Posterior vena cava (tissue), 2 donors: ENCODE measurements at regions of chr4 and their contacts with region 1.

Region 1: GRCh38 chr4:75146223-75146622 is 213.3 kb downstream of the PARM1 start:
- DNase-seq: no peak

Region 2: DNA sequence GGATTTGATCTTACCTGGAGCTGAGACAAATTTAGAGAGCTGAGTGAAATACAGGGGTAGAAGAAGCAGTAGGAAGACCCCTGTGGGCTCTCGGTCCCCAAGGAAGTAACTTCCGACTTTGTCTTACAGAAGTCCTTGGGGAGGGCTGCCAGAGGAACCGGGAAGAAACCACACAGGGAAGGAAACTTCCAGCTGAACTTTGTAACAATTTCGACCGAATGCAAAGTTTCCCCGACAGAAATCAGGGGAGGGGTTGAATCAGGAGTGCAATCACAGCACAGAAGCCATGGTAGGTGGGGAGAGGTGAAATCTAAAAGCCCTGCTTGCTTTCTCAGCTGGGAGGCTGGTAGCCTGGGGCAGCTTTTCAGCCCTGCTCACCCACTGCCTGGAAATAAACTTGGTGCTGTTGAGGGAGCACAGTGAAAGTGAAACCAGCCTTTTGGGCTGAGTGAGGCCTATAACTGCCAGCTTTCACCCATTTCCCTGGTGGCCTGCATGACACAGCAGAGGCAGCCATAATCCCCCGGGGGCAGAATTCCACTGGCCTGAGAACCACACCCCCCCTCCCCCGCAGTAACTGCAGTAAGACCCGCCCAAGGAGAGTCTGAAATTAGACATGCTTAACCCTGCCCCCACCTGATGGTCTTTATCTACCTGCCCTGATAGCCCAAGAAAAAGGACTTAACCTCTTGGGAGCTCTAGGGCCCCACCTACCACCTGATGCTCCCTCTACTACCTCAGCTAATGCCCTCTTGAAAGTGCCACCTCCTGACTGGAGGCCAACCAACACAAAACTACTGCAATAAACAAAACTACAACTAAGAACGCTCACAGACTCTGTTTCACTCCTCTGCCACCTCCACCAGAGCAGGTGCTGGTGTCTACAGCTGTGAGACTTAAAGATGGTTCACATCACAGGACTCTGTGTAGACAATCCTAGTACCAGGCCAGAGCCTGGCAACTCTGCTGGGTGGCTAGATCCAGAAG is 34.9 kb after region 1 on chr4:
- intact Hi-C with region 1: loop called in 1 of 2 experiments (anchors 1 kb)
- DNase-seq: no peak